Naive thymus-derived CD4-positive, alpha-beta T cell (primary cell): ENCODE measurements at regions of chr19 and their contacts with region 1.

Region 1: GRCh38 chr19:2300533-2300932 is 7.4 kb downstream of the LINGO3 start:
- DNase-seq: no peak
- ATAC-seq: no peak
- H3K4me3 ChIP-seq: no peak overlapping the region
- H3K4me3 Mint-ChIP-seq: no peak overlapping the region
- H3K27ac ChIP-seq: no peak overlapping the region
- H3K27ac Mint-ChIP-seq: no peak overlapping the region
- H3K4me1 ChIP-seq: peaks cover 0 to 8% of the 10 kb centered on the region in 2 donors
- H3K4me1 Mint-ChIP-seq: peaks cover 6 to 16% (median 11%) of the 10 kb centered on the region in 7 donors
- H3K27me3 ChIP-seq: no peaks in the 10 kb centered on the region
- H3K27me3 Mint-ChIP-seq: peaks cover 0 to 39% (median 15%) of the 10 kb centered on the region in 5 donors

Region 2: GRCh38 chr19:2289714-2290435 is 10.7 kb before region 1 on chr19:
- CTCF ChIA-PET with region 1: interaction called, 5 read pairs
- POLR2A ChIA-PET with region 1: interaction called, 17 read pairs
- intact Hi-C with region 1: no loop called
- DNase-seq: peak; percentile 54 to 77 (median 66)
- ATAC-seq: peak; percentile 77
- H3K4me3 ChIP-seq: peak overlapping the region; percentile 74
- H3K4me3 Mint-ChIP-seq: peak overlapping the region; percentile 87 to 96 (median 91)
- H3K27ac ChIP-seq: peak overlapping the region; percentile 59
- H3K27ac Mint-ChIP-seq: peak overlapping the region; percentile 88 to 98 (median 92)
- H3K4me1 ChIP-seq: peaks cover 15 to 19% of the 10 kb centered on the region in 2 donors
- H3K4me1 Mint-ChIP-seq: peaks cover 22 to 42% (median 31%) of the 10 kb centered on the region in 7 donors
- H3K27me3 ChIP-seq: no peaks in the 10 kb centered on the region
- H3K27me3 Mint-ChIP-seq: no peaks in the 10 kb centered on the region

Region 3: DNA sequence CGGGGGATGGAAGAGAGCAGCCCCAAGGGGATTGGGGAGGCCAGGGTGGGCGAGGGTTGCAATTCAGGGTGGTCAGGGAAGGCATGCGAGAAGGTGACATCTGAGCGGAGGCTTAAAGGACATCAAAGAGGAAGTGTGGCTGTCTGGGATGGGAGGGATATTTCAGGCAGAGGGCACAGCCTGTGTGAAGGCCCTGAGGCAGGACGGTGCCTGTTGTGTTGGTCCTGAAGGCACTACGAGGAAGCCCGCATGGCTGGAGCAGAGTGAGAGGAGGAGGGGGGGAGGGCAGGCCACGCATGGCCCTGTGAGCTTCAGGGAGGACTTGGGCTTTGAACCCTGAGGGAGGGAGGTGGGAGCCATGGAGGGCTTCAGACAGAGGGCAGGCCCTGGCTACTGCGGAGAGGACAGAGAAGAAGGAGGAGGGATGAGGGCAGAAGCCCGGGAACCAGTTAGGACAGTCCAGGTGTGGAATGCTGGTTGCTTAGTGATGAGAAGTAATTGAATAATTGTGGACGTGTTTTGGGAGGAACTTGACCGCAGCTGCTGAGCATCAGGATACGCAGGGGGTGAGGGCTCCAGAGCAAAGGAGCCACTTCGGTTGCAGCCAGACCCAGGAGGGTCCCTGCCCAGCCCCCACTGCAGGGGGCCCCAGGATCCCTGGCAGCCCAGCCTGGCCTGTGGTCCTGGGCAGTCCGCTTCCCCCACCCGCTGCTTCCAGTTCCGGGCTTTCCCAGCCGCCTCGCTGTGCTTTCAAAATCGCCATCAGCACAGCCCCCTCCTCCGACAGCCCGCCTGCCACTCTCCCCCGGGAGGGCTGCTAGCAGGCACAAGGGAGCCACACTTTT is 683.0 kb after region 1 on chr19:
- CTCF ChIA-PET with region 1: no interaction called
- POLR2A ChIA-PET with region 1: no interaction called
- intact Hi-C with region 1: no loop called
- DNase-seq: no peak
- ATAC-seq: no peak
- H3K4me3 ChIP-seq: no peak overlapping the region
- H3K4me3 Mint-ChIP-seq: no peak overlapping the region
- H3K27ac ChIP-seq: no peak overlapping the region
- H3K27ac Mint-ChIP-seq: no peak overlapping the region
- H3K4me1 ChIP-seq: no peaks in the 10 kb centered on the region
- H3K4me1 Mint-ChIP-seq: peaks cover 0 to 7% (median 0%) of the 10 kb centered on the region in 7 donors
- H3K27me3 ChIP-seq: no peaks in the 10 kb centered on the region
- H3K27me3 Mint-ChIP-seq: peaks cover 6 to 26% (median 13%) of the 10 kb centered on the region in 5 donors